Left lung (tissue), 14 donors: ENCODE measurements at regions of chrX and their contacts with region 1.

Region 1: DNA sequence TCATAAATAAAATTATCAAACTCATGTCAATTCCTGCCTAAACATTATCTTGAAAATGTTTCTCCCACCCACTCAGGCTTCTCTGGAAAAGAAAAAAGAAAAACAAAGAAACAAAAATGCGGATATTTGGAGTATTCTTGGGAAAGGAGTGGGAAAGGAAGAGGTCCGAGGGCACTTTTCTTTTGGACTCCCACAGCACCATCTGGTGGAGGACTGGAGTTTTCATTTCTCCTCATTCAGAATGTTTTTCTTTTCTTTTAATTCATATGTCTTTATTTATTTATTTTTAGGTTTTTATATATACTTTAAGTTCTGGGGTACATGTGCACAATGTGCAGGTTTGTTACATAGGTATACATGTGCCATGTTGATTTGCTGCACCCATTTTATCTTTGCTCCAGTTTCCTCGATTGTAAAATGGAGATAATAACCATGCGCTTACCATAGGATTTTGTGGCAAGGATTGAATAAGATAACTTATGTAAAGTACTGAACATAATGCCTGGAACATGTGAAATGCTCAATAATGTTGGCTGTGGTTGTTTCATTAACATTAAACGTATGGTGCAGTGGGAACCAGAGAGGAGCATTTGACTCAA is 8.0 kb upstream of the KCNE5 start:
- DNase-seq: peak in 1 of 4 donors; percentile 40
- ATAC-seq: peak; percentile 45
- H3K4me3 ChIP-seq: no peak overlapping the region
- H3K27ac ChIP-seq: no peak overlapping the region
- H3K4me1 ChIP-seq: no peaks in the 10 kb centered on the region
- H3K27me3 ChIP-seq: no peaks in the 10 kb centered on the region
- CTCF ChIP-seq: peak; percentile 28 to 30

Region 2: GRCh38 chrX:109485470-109486340 is 147.3 kb before region 1 on chrX:
- intact Hi-C with region 1: loop called in 1 of 2 experiments (anchors 5 kb)
- DNase-seq: peak in 3 of 4 donors; percentile 53 to 70 (median 61)
- ATAC-seq: peak; percentile 96
- H3K4me3 ChIP-seq: no peak overlapping the region
- H3K27ac ChIP-seq: no peak overlapping the region
- H3K4me1 ChIP-seq: no peaks in the 10 kb centered on the region
- H3K27me3 ChIP-seq: peaks cover 0 to 11% of the 10 kb centered on the region in 2 donors
- CTCF ChIP-seq: peak; percentile 81 to 97

Region 3: GRCh38 chrX:109751698-109752097 is 118.7 kb after region 1 on chrX:
- intact Hi-C with region 1: no loop called
- DNase-seq: no peak
- ATAC-seq: peak; percentile 82
- H3K4me3 ChIP-seq: no peak overlapping the region
- H3K27ac ChIP-seq: peak overlapping the region in 1 of 2 donors; percentile 33
- H3K4me1 ChIP-seq: no peaks in the 10 kb centered on the region
- H3K27me3 ChIP-seq: no peaks in the 10 kb centered on the region
- CTCF ChIP-seq: no peak